Panc1 (cell line): ENCODE measurements at regions of chr10 and their contacts with region 1.

Region 1: DNA sequence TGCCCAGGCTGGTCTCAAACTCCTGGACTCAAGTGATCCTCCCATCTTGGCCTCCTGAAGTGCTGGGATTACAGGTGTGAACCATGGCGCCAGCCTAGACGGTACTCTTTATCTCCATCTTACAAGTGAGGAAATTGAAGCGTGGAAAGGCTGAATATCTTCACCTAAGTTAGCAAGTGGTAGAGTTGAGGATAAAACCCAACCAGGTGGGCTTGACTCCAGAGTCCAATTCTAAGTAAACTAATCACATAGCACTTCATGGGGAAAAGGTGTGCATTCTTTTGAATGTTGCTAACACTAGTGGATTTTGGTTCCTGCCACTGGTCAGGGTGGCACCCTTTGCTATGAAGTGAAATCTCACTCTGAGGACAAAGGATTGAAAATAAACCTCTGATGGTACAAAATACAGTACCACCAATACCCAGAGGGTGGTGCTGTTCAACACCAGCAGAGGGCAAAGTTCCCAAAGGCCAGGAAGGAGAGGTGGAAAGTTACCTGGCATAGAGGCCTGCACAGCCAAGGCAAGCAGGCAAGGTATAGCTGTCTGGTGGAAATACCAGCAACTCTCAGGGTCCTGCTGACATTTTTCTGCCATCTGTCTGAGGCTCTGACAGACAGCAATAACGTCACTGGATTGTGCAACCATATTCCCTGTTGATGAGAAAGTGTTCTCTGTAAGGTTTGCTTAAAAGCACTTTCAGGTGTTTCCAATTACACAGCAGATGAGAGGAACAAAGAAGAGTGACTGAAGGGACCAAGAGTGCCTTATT is 17.6 kb downstream of the ZDHHC16 start:
- DNase-seq: peak; percentile 51
- ATAC-seq: peak; percentile 77
- H3K4me3 ChIP-seq: no peak overlapping the region
- H3K27ac ChIP-seq: no peak overlapping the region
- H3K4me1 ChIP-seq: no peaks in the 10 kb centered on the region
- H3K27me3 ChIP-seq: no peaks in the 10 kb centered on the region
- CTCF ChIP-seq: peak; percentile 95

Region 2: GRCh38 chr10:97475936-97476594 is 12.5 kb after region 1 on chr10:
- CTCF ChIA-PET with region 1: no interaction called
- POLR2A ChIA-PET with region 1: interaction called, 14 read pairs
- in situ Hi-C with region 1: no loop called
- intact Hi-C with region 1: no loop called
- DNase-seq: no peak
- ATAC-seq: no peak
- H3K4me3 ChIP-seq: no peak overlapping the region
- H3K27ac ChIP-seq: no peak overlapping the region
- H3K4me1 ChIP-seq: peaks cover 5% of the 10 kb centered on the region; the same call in 1 of the 2 replicates
- H3K27me3 ChIP-seq: no peaks in the 10 kb centered on the region
- CTCF ChIP-seq: no peak

Region 3: DNA sequence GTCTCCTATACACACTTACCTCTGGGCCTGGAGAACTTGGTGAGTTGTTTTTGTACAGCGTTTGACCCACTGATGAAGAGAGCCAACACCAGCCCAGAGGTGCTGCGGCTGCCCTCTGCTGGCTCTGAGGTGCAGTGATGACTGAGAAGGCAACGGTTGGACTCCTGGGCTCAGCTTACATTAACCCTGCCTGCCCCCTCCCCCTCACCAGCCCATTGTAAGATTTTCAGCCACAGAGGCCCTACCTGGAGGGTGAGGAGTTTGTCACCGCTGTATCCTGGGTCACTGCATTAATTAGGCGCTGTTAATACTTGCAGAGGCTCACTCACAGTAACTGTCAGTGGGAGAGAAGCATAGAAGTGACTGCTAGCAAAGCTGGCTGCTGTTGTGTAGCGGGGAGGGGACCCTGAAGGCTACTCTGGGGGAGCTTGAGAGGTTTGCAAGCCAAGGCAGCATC is 90.1 kb after region 1 on chr10:
- CTCF ChIA-PET with region 1: interaction called, 5 read pairs
- POLR2A ChIA-PET with region 1: no interaction called
- in situ Hi-C with region 1: no loop called
- intact Hi-C with region 1: loop called (anchors 1 kb)
- DNase-seq: no peak
- ATAC-seq: peak; percentile 95
- H3K4me3 ChIP-seq: no peak overlapping the region
- H3K27ac ChIP-seq: peak overlapping the region; percentile 76
- H3K4me1 ChIP-seq: peaks cover 26% of the 10 kb centered on the region
- H3K27me3 ChIP-seq: no peaks in the 10 kb centered on the region
- CTCF ChIP-seq: peak; percentile 99